ENCODE measurements at regions of chr19 and their contacts with region 1.

Region 1: GRCh38 chr19:39144245-39145071 is 18.9 kb downstream of the PAK4 start:
- DNase-seq: no peak
- ATAC-seq: peak; percentile 51
- H3K4me3 Mint-ChIP-seq: no peak overlapping the region
- H3K27ac Mint-ChIP-seq: peak overlapping the region; percentile 33
- H3K4me1 Mint-ChIP-seq: peaks cover 68% of the 10 kb centered on the region
- H3K27me3 Mint-ChIP-seq: no peaks in the 10 kb centered on the region
- CTCF ChIP-seq: no peak

Region 2: GRCh38 chr19:39156326-39157230 is 12.1 kb after region 1 on chr19:
- CTCF ChIA-PET with region 1: interaction called, 21 read pairs
- POLR2A ChIA-PET with region 1: interaction called, 9 read pairs
- DNase-seq: no peak
- ATAC-seq: no peak
- H3K4me3 Mint-ChIP-seq: no peak overlapping the region
- H3K27ac Mint-ChIP-seq: no peak overlapping the region
- H3K4me1 Mint-ChIP-seq: peaks cover 40% of the 10 kb centered on the region
- H3K27me3 Mint-ChIP-seq: no peaks in the 10 kb centered on the region; the same call in 1 of the 2 replicates
- CTCF ChIP-seq: no peak

Region 3: DNA sequence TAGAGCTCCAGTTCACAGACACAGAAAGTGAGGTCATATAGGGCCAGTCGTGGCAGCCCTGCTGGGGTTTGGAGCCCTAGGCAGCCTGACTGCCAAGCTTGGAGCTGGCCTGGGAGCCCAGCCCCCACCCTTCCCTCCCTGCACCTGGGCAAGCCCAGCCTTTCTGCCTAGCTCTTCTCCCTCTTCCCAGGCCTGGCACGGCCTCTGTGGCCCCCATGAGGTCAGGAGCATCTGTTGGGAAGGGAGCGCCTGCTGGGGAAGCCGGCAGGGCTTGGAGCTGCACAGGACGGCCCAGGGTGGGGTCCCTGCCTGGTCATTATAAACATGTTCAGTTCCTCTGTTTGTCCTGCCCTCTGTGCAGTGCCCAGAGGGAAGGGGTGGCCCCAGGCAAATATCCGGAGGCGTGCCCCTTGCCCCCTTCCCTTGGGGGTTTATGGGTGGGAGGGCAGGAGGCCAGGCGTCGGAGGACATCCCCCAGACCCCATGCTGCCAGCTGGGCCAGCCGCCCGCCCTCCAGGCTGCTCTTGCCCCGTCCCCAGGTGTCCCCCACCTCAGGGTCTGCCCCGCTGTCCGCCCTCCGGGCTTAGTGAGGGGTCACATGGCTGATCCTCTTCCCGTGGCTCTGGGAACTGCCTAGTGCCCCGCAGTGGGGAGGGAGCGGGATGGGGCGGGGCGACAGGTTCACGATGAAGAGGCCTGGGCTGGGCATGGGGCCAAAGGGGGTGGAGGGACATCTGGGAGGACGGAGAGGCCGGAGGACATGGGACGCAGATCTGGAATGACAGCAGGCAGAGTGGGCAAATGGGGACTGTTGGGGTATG is 22.3 kb after region 1 on chr19:
- CTCF ChIA-PET with region 1: interaction called, 15 read pairs
- POLR2A ChIA-PET with region 1: no interaction called
- DNase-seq: peak; percentile 31
- ATAC-seq: peak; percentile 16
- H3K4me3 Mint-ChIP-seq: no peak overlapping the region
- H3K27ac Mint-ChIP-seq: no peak overlapping the region; the same call in 1 of the 2 replicates
- H3K4me1 Mint-ChIP-seq: peaks cover 21% of the 10 kb centered on the region
- H3K27me3 Mint-ChIP-seq: no peaks in the 10 kb centered on the region
- CTCF ChIP-seq: no peak

Region 4: DNA sequence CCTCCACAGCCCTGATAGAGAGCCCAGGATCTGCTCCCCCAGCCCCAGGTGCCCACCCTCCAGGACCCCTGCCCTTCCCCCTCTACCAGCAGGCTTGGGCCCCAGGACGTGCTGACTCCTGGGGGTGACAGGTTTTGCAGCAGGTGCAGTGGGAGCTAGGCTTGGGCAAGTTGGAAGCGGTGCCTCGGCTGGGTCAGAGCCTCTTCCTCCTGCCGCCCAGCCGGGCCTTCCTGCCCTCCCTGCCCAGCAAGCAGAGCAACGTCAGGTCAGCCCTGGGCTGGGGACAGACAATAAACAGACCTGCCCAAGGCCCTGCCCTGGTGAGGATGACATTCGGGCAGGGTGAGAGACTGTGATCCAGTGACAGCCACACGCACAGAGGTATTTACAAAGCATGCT is 43.1 kb after region 1 on chr19:
- CTCF ChIA-PET with region 1: interaction called, 12 read pairs
- POLR2A ChIA-PET with region 1: no interaction called
- DNase-seq: no peak
- ATAC-seq: peak; percentile 44
- H3K4me3 Mint-ChIP-seq: no peak overlapping the region
- H3K27ac Mint-ChIP-seq: 0 out of 2 replicates have a peak overlapping the region, but pooled peaks have one; percentile 50
- H3K4me1 Mint-ChIP-seq: no peaks in the 10 kb centered on the region
- H3K27me3 Mint-ChIP-seq: peaks cover 2% of the 10 kb centered on the region; the same call in 1 of the 2 replicates
- CTCF ChIP-seq: no peak; the same call in 1 of the 2 replicates

Measured in WTC11 (cell line).